ENCODE measurements at regions of chr12 and their contacts with region 1.

Region 1: DNA sequence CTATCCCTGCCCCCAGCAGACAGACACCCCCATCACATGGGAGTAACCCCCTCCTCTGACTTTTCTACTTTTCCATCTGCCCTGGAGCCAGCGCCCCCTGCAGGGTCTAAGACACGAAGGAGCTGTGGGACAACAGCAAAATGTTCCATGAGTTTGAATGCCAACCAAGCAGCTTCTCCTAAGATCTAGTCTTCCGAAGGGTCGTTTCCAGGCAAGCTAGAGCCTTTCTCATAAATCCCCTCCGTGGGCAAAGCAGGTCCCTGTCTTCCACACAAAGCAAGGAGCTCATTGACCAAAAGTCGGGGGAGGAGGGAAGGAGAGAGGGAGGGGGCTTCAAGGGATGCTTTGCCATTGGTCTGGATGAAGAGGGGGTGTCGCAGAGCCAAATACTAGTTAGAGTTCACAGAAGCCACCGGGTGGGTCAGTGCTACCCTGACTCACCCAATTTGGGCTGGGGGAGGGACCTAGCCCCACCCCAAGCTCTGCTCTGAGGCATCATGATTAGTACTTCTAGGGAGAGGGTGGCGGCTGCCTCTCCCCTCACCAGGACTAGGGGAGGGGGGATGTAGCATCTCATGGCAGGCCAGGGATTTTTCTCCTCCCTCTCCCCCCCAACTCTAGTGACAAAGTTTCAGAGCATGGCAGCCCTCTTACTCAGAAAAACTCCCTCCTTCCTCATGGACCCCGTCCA is 1.6 kb downstream of the MSI1 start:
- DNase-seq: peak; percentile 65
- ATAC-seq: peak; percentile 7
- H3K4me3 Mint-ChIP-seq: peak overlapping the region; percentile 83
- H3K27ac Mint-ChIP-seq: peak overlapping the region; percentile 93
- H3K4me1 Mint-ChIP-seq: peaks cover 69% of the 10 kb centered on the region
- H3K27me3 Mint-ChIP-seq: peaks cover 29% of the 10 kb centered on the region
- CTCF ChIP-seq: peak; percentile 55

Region 2: DNA sequence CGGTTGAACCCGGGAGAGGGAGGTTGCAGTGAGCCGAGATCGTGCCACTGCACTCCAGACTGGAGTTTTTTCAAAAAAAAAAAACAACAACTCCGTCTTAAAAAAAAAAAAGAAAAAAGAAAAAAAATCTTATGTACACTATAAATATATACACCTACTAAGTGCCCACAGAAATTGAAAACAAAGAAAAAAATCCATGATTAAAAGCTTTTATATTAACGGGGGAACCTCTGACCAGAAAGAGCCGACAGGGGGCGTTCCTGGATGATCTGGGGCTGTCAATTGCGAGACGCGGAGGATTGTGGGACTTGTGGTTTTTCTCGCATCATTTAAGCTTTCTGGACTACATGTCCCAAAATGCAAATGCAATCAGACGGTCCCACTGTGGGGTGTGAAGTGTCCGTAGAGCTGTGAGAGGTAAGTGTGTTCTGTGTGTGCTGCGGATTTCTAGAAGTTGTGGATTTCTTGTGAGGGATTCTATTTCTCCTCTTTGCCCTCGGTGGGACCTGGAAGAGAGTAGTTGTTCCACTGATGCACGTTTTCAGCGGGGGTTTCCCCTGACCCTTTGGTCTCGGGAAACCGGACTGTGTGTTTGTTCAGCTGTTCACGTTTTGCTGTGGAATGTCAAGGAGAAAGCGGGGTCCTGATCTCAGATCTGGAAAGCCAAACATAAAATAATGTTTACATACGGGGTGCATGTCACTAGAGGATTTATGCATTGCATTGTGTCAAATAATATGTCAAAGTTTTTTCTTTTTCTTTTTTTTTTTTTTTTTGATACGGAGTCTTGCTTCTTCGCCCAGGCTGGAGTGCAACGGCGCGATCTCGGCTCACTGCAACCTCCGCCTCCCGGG is 65.2 kb before region 1 on chr12 and contains the start of gene SIRT4:
- CTCF ChIA-PET with region 1: interaction called, 17 read pairs
- POLR2A ChIA-PET with region 1: no interaction called
- DNase-seq: peak; percentile 89
- ATAC-seq: peak; percentile 95
- H3K4me3 Mint-ChIP-seq: peak within 1 kb of the TSS; percentile 95
- H3K27ac Mint-ChIP-seq: peak within 1 kb of the TSS; percentile 91
- H3K4me1 Mint-ChIP-seq: peaks cover 6% of the 10 kb centered on the region; the same call in 1 of the 2 replicates
- H3K27me3 Mint-ChIP-seq: peaks cover 3% of the 10 kb centered on the region; the same call in 1 of the 2 replicates
- CTCF ChIP-seq: peak; percentile 52; the same call in 1 of the 2 replicates
- total RNA-seq, gene SIRT4: 2.1 to 4.3 TPM (median 2.8 TPM) in 3 replicates

Region 3: DNA sequence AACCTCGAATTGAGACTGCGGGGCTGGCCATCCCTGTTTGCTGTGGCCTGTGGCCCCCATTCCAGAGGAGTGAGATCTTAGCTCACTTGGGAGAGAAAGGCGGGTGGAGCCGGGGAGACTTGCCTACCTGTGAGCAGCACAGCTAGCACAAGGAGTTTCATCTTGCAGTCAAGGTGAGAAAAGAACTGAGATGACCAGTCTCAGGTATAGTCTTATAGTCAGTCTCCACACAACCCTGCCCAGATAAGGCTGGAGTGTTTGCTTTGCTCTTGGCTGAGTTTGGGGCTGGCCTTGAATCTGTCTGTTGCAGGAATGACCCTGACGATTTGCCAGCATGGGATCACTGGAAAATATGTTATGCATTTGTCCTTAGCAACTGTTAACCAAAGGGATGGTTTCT is 39.8 kb before region 1 on chr12 and contains the start of gene PLA2G1B:
- CTCF ChIA-PET with region 1: no interaction called
- POLR2A ChIA-PET with region 1: no interaction called
- DNase-seq: no peak
- ATAC-seq: no peak
- H3K4me3 Mint-ChIP-seq: no peak within 1 kb of the TSS
- H3K27ac Mint-ChIP-seq: no peak within 1 kb of the TSS
- H3K4me1 Mint-ChIP-seq: peaks cover 5% of the 10 kb centered on the region; the same call in 1 of the 2 replicates
- H3K27me3 Mint-ChIP-seq: no peaks in the 10 kb centered on the region; the same call in 1 of the 2 replicates
- CTCF ChIP-seq: no peak
- total RNA-seq, gene PLA2G1B: 0.92 to 1.8 TPM (median 1.4 TPM) in 3 replicates

Region 4: GRCh38 chr12:120381752-120382419 is 14.5 kb after region 1 on chr12:
- CTCF ChIA-PET with region 1: interaction called, 37 read pairs
- POLR2A ChIA-PET with region 1: interaction called, 4 read pairs
- DNase-seq: no peak
- ATAC-seq: no peak
- H3K4me3 Mint-ChIP-seq: no peak overlapping the region
- H3K27ac Mint-ChIP-seq: no peak overlapping the region; the same call in 1 of the 2 replicates
- H3K4me1 Mint-ChIP-seq: peaks cover 8% of the 10 kb centered on the region
- H3K27me3 Mint-ChIP-seq: peaks cover 6% of the 10 kb centered on the region; the same call in 1 of the 2 replicates
- CTCF ChIP-seq: no peak

Region 5: GRCh38 chr12:120394483-120395367 is 27.3 kb after region 1 on chr12:
- CTCF ChIA-PET with region 1: interaction called, 25 read pairs
- POLR2A ChIA-PET with region 1: interaction called, 8 read pairs
- DNase-seq: peak; percentile 79
- ATAC-seq: peak; percentile 98
- H3K4me3 Mint-ChIP-seq: peak overlapping the region; percentile 45
- H3K27ac Mint-ChIP-seq: peak overlapping the region; percentile 95
- H3K4me1 Mint-ChIP-seq: peaks cover 46% of the 10 kb centered on the region
- H3K27me3 Mint-ChIP-seq: no peaks in the 10 kb centered on the region
- CTCF ChIP-seq: no peak

Region 6: GRCh38 chr12:120413901-120414695 is 46.7 kb after region 1 on chr12:
- CTCF ChIA-PET with region 1: interaction called, 12 read pairs
- POLR2A ChIA-PET with region 1: no interaction called
- DNase-seq: peak; percentile 84
- ATAC-seq: peak; percentile 99
- H3K4me3 Mint-ChIP-seq: peak overlapping the region; percentile 47
- H3K27ac Mint-ChIP-seq: peak overlapping the region; percentile 97
- H3K4me1 Mint-ChIP-seq: peaks cover 23% of the 10 kb centered on the region
- H3K27me3 Mint-ChIP-seq: no peaks in the 10 kb centered on the region
- CTCF ChIP-seq: no peak

Region 7: DNA sequence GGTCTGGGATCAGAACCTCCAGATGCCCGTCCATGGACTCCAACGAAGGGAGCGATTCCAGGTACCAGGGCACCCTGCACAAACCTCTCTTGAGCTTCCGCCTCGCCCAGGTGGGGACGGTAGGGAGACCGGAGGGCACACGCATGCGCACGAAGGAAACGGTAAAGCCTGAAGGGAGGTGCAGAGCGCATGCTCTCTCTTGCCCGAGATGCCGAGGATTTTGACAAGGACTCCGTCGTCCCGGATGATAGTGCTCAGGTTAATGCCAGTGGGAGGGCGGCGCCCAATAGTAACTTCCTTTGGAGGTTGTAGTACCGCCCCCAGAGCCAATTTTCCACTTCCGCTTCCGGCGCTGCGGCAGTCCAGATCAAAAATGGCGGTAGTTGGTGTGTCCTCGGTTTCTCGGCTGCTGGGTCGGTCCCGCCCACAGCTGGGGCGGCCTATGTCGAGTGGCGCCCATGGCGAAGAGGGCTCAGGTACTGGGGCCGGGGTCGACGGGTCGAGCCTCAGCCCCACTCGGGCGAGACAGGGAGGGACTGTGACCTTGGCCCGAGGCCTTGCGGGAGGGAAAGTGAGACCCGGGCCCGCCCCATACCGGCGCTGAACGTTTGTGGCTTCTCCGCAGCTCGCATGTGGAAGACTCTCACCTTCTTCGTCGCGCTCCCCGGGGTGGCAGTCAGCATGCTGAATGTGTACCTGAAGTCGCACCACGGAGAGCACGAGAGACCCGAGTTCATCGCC is 70.5 kb after region 1 on chr12 and contains the start of gene COX6A1:
- CTCF ChIA-PET with region 1: interaction called, 22 read pairs
- POLR2A ChIA-PET with region 1: interaction called, 4 read pairs
- DNase-seq: peak; percentile 97
- ATAC-seq: peak; percentile 96
- H3K4me3 Mint-ChIP-seq: peak within 1 kb of the TSS; percentile 94
- H3K27ac Mint-ChIP-seq: peak within 1 kb of the TSS; percentile 99
- H3K4me1 Mint-ChIP-seq: peaks cover 14% of the 10 kb centered on the region
- H3K27me3 Mint-ChIP-seq: no peaks in the 10 kb centered on the region
- CTCF ChIP-seq: no peak
- total RNA-seq, gene COX6A1: 511 to 573 TPM (median 515 TPM) in 3 replicates